ENCODE measurements at regions of chr17 and their contacts with region 1.

Region 1: DNA sequence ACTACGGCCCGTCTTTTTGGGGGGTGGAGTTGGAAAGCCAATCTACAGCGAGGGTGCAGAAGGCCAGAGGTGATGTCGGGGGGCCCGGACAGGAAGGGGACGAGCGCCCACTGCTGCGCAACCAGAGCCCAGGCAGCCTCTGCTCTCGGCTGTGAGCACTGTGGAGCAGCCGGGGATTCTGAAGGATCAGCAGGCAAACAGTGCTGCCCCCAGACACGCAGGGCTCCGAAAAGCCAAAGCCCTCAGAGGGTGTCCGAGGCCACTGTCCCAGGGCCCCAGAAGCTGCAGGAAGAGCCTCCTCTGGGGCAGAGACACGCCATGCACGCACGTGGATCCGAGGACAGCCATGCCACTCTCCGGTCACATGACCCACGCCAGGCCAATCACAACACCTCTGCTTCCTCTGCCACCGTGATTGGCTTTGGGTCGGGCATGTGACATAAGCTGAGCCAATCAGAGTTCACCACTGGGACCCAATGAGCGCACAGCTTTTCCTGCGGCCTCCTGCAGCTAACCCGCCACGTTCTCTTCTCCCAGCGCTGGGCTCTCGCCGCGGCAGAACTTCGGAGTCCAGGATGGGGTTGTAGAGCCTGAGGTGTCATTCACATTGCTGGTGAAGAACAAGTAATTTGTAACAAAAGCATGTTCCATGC is 40.7 kb downstream of the ACTG1 start:
- DNase-seq: peak; percentile 97
- H3K4me3 ChIP-seq: peak overlapping the region in 3 of 4 donors; percentile 26 to 45 (median 40)
- H3K27ac ChIP-seq: peak overlapping the region; percentile 35 to 70 (median 52)
- H3K4me1 ChIP-seq: peaks cover 0 to 18% (median 13%) of the 10 kb centered on the region in 4 donors
- H3K27me3 ChIP-seq: no peaks in the 10 kb centered on the region
- CTCF ChIP-seq: peak; percentile 51 to 71 (median 64)
- EP300 ChIP-seq: no peak
- POLR2A ChIP-seq: no peak

Region 2: DNA sequence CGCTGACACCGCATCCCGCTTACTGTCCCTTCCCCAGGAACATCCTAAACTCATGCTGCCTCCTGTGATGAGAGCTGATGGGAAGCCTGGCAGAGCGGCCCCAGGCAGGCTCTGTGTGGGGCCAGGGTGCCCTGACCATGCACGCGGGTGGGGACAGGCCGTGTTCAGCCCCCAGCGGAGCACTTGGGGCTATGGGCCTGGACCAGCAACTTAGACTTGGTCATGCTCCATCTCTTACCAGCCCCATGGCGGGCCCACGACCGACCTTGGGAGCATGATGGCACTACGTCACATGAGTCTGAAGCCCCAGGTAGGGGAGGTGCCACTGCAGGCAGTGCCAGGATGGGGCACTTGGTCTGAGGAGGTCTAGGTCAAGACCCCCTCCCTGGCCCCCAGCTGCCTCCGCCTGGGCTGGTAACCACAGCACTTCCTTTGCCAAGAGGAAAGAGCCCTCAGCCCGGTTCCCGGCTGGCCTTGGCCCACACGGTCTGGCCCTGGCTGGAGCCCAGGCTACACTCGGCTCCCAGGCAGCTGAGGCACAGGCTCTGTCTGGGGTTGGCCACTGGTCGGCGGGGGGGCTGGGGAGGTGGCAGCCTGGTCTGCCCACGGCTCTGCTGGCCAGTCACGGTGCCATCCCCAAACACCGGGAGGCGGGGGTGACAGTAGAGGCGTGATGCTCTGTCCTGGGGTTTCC is 51.0 kb before region 1 on chr17:
- intact Hi-C with region 1: loop called (anchors 1 kb)
- DNase-seq: no peak
- H3K4me3 ChIP-seq: no peak overlapping the region
- H3K27ac ChIP-seq: peak overlapping the region; percentile 76 to 99 (median 82)
- H3K4me1 ChIP-seq: peaks cover 0 to 80% (median 72%) of the 10 kb centered on the region in 4 donors
- H3K27me3 ChIP-seq: no peaks in the 10 kb centered on the region
- CTCF ChIP-seq: no peak
- EP300 ChIP-seq: no peak
- POLR2A ChIP-seq: no peak

Region 3: DNA sequence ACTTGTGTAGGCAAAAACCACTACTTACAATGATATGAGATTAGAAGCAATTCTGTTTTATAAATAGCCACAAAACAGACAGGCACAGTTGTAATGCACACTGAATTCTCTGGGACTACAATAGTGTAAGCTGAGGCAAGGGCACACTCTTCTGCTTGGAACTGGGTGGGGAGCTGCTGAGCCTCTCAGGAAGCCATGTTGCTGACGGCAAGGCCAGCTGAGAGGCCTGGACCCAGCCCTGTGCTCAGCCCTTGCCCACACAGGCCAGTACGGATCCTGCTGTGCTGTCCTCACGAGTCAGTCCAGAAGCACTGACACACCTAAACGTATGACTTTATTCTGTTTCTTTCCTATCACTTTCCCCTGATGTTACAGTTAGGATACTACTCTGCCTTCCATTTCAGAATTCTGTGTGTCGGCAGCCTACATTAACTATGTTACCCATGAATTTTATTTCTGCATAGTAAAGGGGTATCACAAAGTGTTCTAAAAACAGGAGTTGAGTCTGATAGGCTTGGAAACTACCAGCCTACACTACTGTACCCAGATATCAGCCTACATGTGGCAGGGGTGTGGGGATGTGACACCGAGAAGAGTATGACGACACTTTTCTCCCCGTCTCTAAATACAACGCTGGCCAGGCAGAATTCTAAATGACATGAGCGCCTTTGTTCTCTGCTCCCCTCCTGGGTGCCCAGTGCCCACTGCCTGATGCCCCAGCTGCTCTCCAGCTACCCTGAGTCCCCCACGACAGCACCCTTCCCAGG is 121.4 kb after region 1 on chr17:
- intact Hi-C with region 1: no loop called
- DNase-seq: no peak
- H3K4me3 ChIP-seq: no peak overlapping the region
- H3K27ac ChIP-seq: no peak overlapping the region
- H3K4me1 ChIP-seq: no peaks in the 10 kb centered on the region
- H3K27me3 ChIP-seq: no peaks in the 10 kb centered on the region
- CTCF ChIP-seq: no peak
- EP300 ChIP-seq: no peak
- POLR2A ChIP-seq: no peak

Measured in sigmoid colon (tissue), 7 donors.